ENCODE measurements at regions of chr12 and their contacts with region 1.

Region 1: GRCh38 chr12:117119592-117120198 is 20.5 kb upstream of the TESC start:
- DNase-seq: peak; percentile 69
- ATAC-seq: peak; percentile 84
- H3K4me3 Mint-ChIP-seq: no peak overlapping the region
- H3K27ac Mint-ChIP-seq: no peak overlapping the region
- H3K4me1 Mint-ChIP-seq: peaks cover 5% of the 10 kb centered on the region; the same call in 1 of the 2 replicates
- H3K27me3 Mint-ChIP-seq: no peaks in the 10 kb centered on the region
- CTCF ChIP-seq: peak; percentile 68; the same call in 1 of the 2 replicates

Region 2: DNA sequence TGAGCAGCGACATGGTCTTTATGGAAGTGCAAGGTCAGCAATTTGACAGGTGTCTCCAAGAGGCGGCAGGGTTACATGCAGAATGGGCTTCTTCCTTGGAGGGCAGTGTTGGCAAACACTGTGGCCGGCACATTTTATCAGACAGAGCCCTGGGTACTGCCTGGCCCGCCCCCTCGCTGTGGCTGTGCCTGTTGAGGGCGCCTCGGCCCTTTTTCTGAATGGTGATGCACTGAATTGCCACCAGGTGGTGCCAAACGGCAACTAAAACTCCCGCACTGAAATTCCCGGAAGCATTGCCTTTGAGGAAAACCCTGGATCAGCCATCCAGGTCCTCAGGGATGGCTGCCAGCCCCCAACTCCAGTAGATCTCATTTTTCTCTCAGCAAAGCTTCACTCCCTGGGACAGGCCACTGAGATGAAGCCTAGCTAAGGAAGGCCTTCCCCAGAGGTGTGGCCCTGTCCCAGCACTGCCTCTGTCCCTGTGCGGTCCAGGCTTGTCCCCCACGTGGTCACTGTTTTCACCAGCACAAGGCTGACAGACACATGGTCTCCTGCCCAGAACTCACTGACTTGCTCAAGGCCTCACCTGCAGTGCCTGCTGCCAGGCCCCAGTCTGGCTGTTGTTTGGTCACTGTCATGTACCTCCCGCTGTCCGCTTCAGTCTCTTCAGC is 94.1 kb before region 1 on chr12:
- CTCF ChIA-PET with region 1: interaction called, 17 read pairs
- POLR2A ChIA-PET with region 1: no interaction called
- DNase-seq: peak; percentile 84
- ATAC-seq: peak; percentile 95
- H3K4me3 Mint-ChIP-seq: no peak overlapping the region
- H3K27ac Mint-ChIP-seq: no peak overlapping the region
- H3K4me1 Mint-ChIP-seq: 0 out of 2 replicates have a peak, but pooled peaks cover 6% of the 10 kb centered on the region
- H3K27me3 Mint-ChIP-seq: no peaks in the 10 kb centered on the region
- CTCF ChIP-seq: peak; percentile 81

Region 3: DNA sequence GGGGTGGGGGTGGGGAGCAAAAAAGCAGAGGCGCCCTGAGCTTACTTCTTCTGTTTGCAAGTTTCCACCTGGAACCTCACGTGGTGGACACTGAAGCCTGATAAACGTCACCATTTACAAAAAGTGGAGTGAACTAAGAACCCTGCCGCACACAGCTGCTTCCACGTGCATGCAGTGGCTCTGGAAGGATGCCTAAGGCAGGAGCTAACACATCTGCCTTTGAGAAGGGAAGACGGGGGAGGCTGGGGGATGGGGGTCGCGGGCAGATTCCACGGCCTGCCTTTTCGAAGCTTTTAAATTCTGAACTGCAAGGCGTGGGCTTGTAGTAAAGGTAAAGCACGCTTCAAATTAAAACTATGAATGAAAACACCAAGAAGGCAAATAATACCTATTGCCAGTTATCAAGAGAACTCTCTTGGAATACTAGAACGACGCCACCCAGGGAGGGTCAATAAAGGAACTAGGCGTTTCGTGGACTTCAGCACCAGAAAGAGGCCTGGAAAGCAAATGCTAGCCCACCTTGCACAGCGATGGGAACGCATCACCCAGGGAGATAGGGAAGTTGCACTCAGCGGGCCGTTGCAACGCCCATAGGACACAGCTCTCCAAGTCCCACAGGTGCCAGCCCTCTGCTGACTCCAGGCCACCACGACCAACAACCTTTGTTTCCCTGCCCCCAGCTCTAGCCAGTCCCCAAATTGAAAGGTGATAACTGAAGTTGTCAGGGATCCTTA is 82.2 kb before region 1 on chr12:
- CTCF ChIA-PET with region 1: interaction called, 34 read pairs
- POLR2A ChIA-PET with region 1: no interaction called
- DNase-seq: no peak
- ATAC-seq: no peak
- H3K4me3 Mint-ChIP-seq: no peak overlapping the region
- H3K27ac Mint-ChIP-seq: no peak overlapping the region
- H3K4me1 Mint-ChIP-seq: peaks cover 26% of the 10 kb centered on the region
- H3K27me3 Mint-ChIP-seq: no peaks in the 10 kb centered on the region
- CTCF ChIP-seq: no peak

Region 4: GRCh38 chr12:117052386-117053049 is 67.2 kb before region 1 on chr12:
- CTCF ChIA-PET with region 1: interaction called, 14 read pairs
- POLR2A ChIA-PET with region 1: no interaction called
- DNase-seq: peak; percentile 58
- ATAC-seq: peak; percentile 67
- H3K4me3 Mint-ChIP-seq: peak overlapping the region; percentile 25; the same call in 1 of the 2 replicates
- H3K27ac Mint-ChIP-seq: peak overlapping the region; percentile 72
- H3K4me1 Mint-ChIP-seq: peaks cover 45% of the 10 kb centered on the region
- H3K27me3 Mint-ChIP-seq: no peaks in the 10 kb centered on the region
- CTCF ChIP-seq: no peak

Region 5: DNA sequence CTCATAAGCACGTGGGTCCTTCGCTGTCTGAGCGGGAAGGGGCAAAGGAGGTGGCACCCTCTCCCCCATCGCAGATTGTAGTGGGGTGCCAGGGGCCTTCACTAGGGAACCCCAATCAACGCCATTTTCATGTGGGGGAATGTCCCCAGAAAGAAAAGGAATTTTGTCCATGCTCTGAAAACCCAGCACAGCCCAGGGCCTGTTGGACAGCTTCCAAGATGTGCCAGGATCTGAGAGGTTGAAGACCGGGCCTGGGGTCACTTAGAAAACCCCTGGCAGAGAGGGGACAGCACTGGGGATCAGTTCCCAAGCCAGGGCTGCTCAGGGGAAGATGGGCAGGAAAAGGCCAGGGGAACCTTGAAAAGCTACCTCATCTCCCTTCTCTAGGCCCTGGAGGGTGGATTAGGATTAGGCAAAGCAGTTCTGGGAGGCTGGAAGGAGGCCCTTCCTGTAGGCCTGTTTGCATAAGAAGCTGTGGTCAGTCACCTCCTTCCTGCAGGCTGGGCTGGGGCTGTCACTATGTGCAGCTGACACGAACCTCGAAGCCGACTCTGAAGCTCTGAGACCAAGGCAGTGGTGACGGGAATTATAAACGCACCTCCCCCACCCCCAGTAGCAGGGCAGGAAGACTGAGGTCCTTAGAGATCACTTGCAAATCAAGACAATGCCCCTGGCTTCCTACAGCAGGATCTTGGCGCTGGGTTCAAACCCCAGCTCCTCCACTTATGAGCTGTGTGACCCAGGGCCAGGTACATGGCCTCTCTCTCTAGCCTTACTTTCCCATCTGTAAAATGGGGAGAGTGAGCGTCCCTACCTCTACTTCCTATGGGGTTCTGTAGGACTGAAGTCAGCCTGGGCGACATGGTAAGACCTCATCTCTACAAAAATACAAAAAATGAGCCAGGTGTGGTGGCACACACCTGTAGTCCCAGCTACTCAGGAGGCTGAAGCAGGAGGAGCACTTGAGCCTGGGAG is 49.5 kb before region 1 on chr12:
- CTCF ChIA-PET with region 1: interaction called, 12 read pairs
- POLR2A ChIA-PET with region 1: no interaction called
- DNase-seq: no peak
- ATAC-seq: peak; percentile 60
- H3K4me3 Mint-ChIP-seq: no peak overlapping the region
- H3K27ac Mint-ChIP-seq: 0 out of 2 replicates have a peak overlapping the region, but pooled peaks have one; percentile 72
- H3K4me1 Mint-ChIP-seq: peaks cover 14% of the 10 kb centered on the region
- H3K27me3 Mint-ChIP-seq: no peaks in the 10 kb centered on the region
- CTCF ChIP-seq: no peak

Region 6: GRCh38 chr12:117098361-117099217 is 21.1 kb before region 1 on chr12:
- CTCF ChIA-PET with region 1: interaction called, 28 read pairs
- POLR2A ChIA-PET with region 1: interaction called, 5 read pairs
- DNase-seq: peak; percentile 46
- ATAC-seq: peak; percentile 52
- H3K4me3 Mint-ChIP-seq: peak overlapping the region; percentile 73
- H3K27ac Mint-ChIP-seq: no peak overlapping the region
- H3K4me1 Mint-ChIP-seq: peaks cover 18% of the 10 kb centered on the region
- H3K27me3 Mint-ChIP-seq: peaks cover 29% of the 10 kb centered on the region
- CTCF ChIP-seq: no peak

Region 7: GRCh38 chr12:117134059-117134458 is 14.4 kb after region 1 on chr12:
- CTCF ChIA-PET with region 1: interaction called, 21 read pairs
- POLR2A ChIA-PET with region 1: no interaction called
- DNase-seq: no peak
- ATAC-seq: no peak
- H3K4me3 Mint-ChIP-seq: no peak overlapping the region
- H3K27ac Mint-ChIP-seq: no peak overlapping the region
- H3K4me1 Mint-ChIP-seq: no peaks in the 10 kb centered on the region
- H3K27me3 Mint-ChIP-seq: no peaks in the 10 kb centered on the region
- CTCF ChIP-seq: no peak

Measured in WTC11 (cell line).